Mammary epithelial cell (primary cell): ENCODE measurements at regions of chr7 and their contacts with region 1.

Region 1: GRCh38 chr7:40733578-40733977 is 598.8 kb downstream of the SUGCT start:
- DNase-seq: no peak
- H3K4me3 ChIP-seq: no peak overlapping the region
- H3K27ac ChIP-seq: no peak overlapping the region
- H3K4me1 ChIP-seq: no peaks in the 10 kb centered on the region
- H3K27me3 ChIP-seq: no peaks in the 10 kb centered on the region
- CTCF ChIP-seq: no peak

Region 2: DNA sequence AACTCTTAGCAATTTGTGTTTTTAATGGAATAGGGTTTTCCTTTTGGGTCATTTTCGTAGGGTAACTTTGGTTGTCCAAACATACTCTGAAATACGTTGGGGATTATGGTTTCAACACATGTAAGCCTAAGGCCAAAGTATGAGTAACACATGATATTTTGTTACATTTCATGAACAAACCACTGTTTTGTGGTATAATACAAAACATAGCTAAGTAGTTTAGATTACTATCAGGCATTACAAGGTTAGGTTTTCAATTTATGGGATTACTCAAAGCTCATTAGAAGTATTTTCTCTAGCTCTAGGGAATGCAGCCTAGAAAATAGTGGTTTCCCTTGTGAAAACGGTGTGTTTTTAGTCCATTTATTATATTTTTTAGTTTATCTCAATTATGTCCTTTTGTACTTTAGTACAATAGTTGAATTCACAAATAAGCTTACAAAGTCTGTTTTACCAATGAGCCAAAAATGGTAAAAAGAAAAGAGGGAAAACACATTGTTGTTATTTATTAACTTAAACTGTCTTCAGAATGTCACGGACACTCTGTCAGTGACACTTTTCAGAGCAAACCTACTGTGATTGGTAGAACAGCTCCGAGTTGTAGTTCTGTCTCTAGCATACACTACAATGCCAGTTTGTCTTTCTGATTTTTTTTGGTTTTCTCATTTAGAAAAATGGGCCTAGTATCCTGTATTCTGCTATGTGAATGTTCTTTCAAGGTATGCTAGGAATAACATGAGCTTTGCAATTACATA is 125.1 kb before region 1 on chr7:
- CTCF ChIA-PET with region 1: no interaction called
- dilution Hi-C with region 1: no loop called
- in situ Hi-C with region 1: no loop called
- intact Hi-C with region 1: no loop called
- DNase-seq: peak; percentile 63
- H3K4me3 ChIP-seq: no peak overlapping the region
- H3K27ac ChIP-seq: no peak overlapping the region
- H3K4me1 ChIP-seq: no peaks in the 10 kb centered on the region
- H3K27me3 ChIP-seq: no peaks in the 10 kb centered on the region
- CTCF ChIP-seq: no peak

Region 3: GRCh38 chr7:40700643-40701421 is 32.7 kb before region 1 on chr7:
- CTCF ChIA-PET with region 1: no interaction called
- dilution Hi-C with region 1: no loop called
- in situ Hi-C with region 1: no loop called
- intact Hi-C with region 1: loop called (anchors 1 kb)
- DNase-seq: peak; percentile 54
- H3K4me3 ChIP-seq: no peak overlapping the region
- H3K27ac ChIP-seq: peak overlapping the region; percentile 18
- H3K4me1 ChIP-seq: peaks cover 38% of the 10 kb centered on the region
- H3K27me3 ChIP-seq: no peaks in the 10 kb centered on the region
- CTCF ChIP-seq: peak; percentile 15 to 28

Region 4: DNA sequence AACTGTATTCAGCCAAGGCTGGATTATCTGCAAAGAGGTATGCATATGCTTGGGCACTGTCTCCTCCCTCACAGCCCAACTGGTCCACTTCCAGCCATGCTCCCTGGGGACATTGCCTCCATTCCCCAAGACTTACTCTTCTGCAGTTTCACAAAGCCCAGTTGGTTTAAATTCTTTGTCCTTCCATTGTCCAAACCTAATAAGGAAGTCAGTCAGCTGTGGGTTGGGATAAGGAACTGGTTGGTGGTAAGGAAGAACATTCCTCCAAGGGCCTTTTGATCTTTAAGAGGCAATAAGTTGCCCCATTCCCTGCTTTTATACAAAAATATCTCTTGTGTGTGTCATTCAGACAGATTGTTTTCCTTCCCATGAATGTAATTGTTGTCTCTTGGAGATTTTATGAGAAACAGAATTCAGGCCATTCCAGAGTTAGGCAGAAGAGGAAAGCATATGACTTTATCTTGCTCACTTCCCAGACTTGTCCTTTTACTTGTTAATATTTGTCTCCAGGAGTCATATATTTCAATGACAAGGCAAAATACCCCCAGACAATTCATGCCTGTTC is 74.9 kb after region 1 on chr7:
- CTCF ChIA-PET with region 1: no interaction called
- dilution Hi-C with region 1: no loop called
- in situ Hi-C with region 1: no loop called
- intact Hi-C with region 1: no loop called
- DNase-seq: peak; percentile 67
- H3K4me3 ChIP-seq: no peak overlapping the region
- H3K27ac ChIP-seq: no peak overlapping the region
- H3K4me1 ChIP-seq: peaks cover 12% of the 10 kb centered on the region
- H3K27me3 ChIP-seq: no peaks in the 10 kb centered on the region
- CTCF ChIP-seq: no peak